Prostate gland (tissue), 2 donors: ENCODE measurements at regions of chr1 and their contacts with region 1.

Region 1: GRCh38 chr1:192808518-192809306 is at the start of gene RGS2:
- DNase-seq: peak; percentile 89
- H3K4me3 ChIP-seq: peak within 1 kb of the TSS; percentile 73 to 78
- H3K27ac ChIP-seq: peak within 1 kb of the TSS; percentile 86 to 88
- H3K4me1 ChIP-seq: no peaks in the 10 kb centered on the region
- H3K27me3 ChIP-seq: no peaks in the 10 kb centered on the region
- CTCF ChIP-seq: peak in 2 of 4 experiments; percentile 7 to 20
- POLR2A ChIP-seq: peak; percentile 100
- total RNA-seq, gene RGS2: 70.2 to 129 TPM

Region 2: DNA sequence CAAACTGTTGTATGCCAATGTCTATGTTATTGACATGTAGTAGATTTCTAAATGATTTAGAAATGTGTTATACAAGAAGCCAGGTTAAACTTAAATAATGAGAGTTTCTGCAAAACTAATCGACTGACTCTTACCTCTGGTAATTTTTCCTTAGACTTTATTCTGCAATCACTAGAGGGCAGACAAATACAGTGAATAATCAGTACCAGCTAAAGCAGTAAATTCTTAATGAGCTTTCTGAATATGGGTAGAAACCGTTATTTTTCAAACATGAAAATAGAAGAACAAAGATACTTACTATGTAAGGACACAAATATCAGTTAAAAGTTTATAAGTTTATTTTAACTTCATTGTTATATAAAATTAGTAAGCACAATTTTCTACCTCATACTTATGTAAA is 331.1 kb before region 1 on chr1:
- intact Hi-C with region 1: loop called (anchors 5 kb)
- DNase-seq: no peak
- H3K4me3 ChIP-seq: no peak overlapping the region
- H3K27ac ChIP-seq: no peak overlapping the region
- H3K4me1 ChIP-seq: no peaks in the 10 kb centered on the region
- H3K27me3 ChIP-seq: no peaks in the 10 kb centered on the region
- CTCF ChIP-seq: peak; percentile 35 to 82 (median 56)
- POLR2A ChIP-seq: no peak

Region 3: DNA sequence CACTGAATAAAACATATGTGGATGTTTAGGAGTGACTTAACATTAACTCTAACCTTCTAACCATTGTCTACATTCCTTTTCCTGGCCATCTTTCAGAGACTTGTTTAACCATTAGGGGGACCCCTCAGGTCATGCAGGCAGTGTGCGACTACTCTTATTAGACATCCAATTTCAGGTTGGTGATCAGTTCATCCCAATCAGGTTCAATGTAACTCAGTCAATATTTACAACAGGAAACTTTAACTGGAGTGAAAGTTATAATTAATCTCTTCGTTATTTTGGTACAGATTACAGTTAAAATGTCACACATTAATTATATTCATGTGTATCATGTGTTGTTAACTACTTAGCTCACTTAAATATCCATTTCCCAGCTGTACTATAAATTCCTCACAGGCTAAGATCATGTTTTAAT is 302.0 kb before region 1 on chr1:
- intact Hi-C with region 1: no loop called
- DNase-seq: no peak
- H3K4me3 ChIP-seq: no peak overlapping the region
- H3K27ac ChIP-seq: no peak overlapping the region
- H3K4me1 ChIP-seq: no peaks in the 10 kb centered on the region
- H3K27me3 ChIP-seq: no peaks in the 10 kb centered on the region
- CTCF ChIP-seq: no peak
- POLR2A ChIP-seq: no peak

Region 4: GRCh38 chr1:192654591-192655251 is 154.0 kb before region 1 on chr1:
- intact Hi-C with region 1: loop called (anchors 10 kb)
- DNase-seq: no peak
- H3K4me3 ChIP-seq: no peak overlapping the region
- H3K27ac ChIP-seq: no peak overlapping the region
- H3K4me1 ChIP-seq: no peaks in the 10 kb centered on the region
- H3K27me3 ChIP-seq: no peaks in the 10 kb centered on the region
- CTCF ChIP-seq: no peak
- POLR2A ChIP-seq: no peak

Region 5: DNA sequence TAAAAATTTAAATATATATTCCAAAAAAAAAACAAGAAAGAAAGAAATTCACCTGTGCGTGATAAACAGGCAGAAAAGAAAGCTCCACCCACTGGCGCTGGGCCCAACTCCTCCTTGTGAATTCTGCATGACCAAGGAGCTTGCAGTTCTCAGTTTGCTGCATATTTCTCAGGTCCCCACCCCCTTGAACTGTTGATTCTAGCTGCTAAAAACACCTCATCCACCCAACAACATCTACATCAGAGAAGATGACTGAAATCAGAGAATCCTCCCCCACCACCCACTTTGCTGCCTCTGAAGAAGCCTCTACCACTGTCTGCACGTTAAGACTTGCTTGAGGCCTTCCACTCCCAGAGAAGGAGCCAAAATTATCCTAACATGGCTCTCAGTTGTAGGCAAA is 105.0 kb after region 1 on chr1:
- intact Hi-C with region 1: loop called (anchors 5 kb)
- DNase-seq: no peak
- H3K4me3 ChIP-seq: no peak overlapping the region
- H3K27ac ChIP-seq: peak overlapping the region; percentile 30 to 65
- H3K4me1 ChIP-seq: no peaks in the 10 kb centered on the region
- H3K27me3 ChIP-seq: no peaks in the 10 kb centered on the region
- CTCF ChIP-seq: no peak
- POLR2A ChIP-seq: no peak

Region 6: DNA sequence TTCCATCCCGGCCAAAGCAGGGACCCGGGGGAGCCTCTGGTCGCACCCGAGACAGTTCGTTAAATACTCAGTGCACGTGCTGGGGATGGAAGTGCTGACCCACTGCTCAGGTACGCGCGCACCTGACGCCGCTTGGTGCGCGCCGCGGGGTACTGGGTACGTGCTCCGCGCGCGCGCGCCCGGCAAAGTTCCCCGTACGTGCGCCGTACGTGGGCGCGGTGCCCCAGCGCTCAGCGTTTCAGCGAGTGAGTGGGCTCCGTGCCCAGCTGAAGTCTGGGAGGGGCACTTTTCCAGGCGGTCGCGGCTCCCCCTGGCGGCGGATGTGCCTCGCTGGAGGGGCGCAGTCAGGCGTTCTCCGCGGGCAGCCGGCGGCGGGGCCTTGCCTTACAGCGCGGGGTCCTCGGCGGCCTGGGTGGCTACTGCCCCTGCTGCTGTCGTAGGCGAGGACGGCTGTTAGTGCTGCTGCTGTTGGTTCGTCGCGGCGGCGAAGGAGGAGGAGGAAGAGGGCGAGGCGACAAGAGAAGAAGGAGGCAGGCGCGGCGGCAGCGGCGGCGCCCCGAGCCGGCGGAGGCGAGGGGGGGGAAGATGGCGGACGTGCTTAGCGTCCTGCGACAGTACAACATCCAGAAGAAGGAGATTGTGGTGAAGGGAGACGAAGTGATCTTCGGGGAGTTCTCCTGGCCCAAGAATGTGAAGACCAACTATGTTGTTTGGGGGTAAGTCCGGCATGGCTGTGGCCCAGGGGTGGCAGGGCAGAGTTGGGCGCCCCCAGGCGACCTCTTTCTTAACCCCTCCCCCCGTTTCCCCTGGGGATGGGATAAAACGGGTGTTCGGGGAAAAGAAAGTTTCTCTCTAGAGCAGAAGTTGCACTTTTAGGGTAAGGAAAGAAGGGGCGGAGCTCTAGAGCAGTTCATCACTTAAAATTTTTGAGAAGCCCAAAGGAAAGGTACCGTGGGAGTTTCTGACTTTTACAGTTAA is 313.2 kb after region 1 on chr1 and contains the start of gene CDC73:
- intact Hi-C with region 1: loop called (anchors 5 kb)
- DNase-seq: peak; percentile 96
- H3K4me3 ChIP-seq: peak within 1 kb of the TSS; percentile 68 to 77
- H3K27ac ChIP-seq: peak within 1 kb of the TSS; percentile 93 to 94
- H3K4me1 ChIP-seq: no peaks in the 10 kb centered on the region
- H3K27me3 ChIP-seq: no peaks in the 10 kb centered on the region
- CTCF ChIP-seq: peak; percentile 92 to 99 (median 96)
- POLR2A ChIP-seq: peak; percentile 86
- total RNA-seq, gene CDC73: 36.2 to 48.0 TPM